Ovary (tissue), 10 donors: ENCODE measurements at regions of chr5 and their contacts with region 1.

Region 1: GRCh38 chr5:79020861-79021561 is 35.9 kb upstream of the ARSB start:
- DNase-seq: peak; percentile 37 to 58 (median 50)
- H3K4me3 ChIP-seq: no peak overlapping the region
- H3K27ac ChIP-seq: no peak overlapping the region
- H3K4me1 ChIP-seq: no peaks in the 10 kb centered on the region
- H3K27me3 ChIP-seq: no peaks in the 10 kb centered on the region
- CTCF ChIP-seq: peak; percentile 37 to 55 (median 50)
- EP300 ChIP-seq: no peak
- POLR2A ChIP-seq: no peak

Region 2: DNA sequence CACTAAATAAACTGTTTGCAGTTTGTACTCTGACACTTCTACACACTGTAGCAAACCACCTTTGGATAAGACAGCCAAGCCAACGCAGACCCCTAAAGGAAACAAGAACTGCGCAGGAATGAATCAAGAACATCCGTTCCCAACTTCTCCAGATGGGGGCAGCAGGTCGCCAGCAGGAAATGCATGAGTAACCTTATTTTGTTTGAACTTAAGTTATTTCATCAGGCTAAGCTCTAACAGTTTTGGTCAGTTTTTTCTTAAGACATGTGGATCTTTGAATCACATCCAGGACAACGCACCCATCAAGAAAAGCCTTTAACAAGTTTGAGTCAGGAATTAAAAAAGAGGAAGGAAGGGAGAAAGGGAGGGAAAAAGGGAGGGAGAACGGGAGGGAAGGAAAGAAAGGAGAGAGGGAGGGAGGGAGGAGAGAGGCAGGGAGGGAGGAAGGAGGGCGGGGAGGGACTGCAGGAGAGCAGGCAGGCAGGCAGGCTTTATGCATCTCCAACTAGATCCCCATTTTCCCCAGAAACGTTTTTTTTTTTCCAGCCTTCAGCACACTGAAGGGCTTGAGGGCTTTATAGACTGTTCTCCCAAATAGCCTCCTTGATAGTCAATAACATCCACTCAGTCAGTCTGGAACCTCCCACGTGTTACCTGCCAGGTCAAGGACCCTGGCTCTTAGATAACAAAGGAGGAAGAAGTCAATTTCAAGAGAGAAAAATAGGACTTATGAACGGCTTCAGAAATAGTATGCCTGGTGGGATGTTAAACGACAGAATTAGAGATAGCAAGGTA is 112.8 kb after region 1 on chr5:
- intact Hi-C with region 1: loop called (anchors 5 kb)
- DNase-seq: peak; percentile 62 to 80 (median 74)
- H3K4me3 ChIP-seq: peak overlapping the region; percentile 22
- H3K27ac ChIP-seq: peak overlapping the region in 1 of 2 donors; percentile 56
- H3K4me1 ChIP-seq: no peaks in the 10 kb centered on the region
- H3K27me3 ChIP-seq: no peaks in the 10 kb centered on the region
- CTCF ChIP-seq: peak; percentile 43 to 73 (median 70)
- EP300 ChIP-seq: no peak
- POLR2A ChIP-seq: no peak

Region 3: GRCh38 chr5:79464695-79465332 is 443.8 kb after region 1 on chr5:
- intact Hi-C with region 1: loop called in 2 of 4 experiments (anchors 5 to 10 kb)
- DNase-seq: no peak
- H3K4me3 ChIP-seq: no peak overlapping the region
- H3K27ac ChIP-seq: no peak overlapping the region
- H3K4me1 ChIP-seq: no peaks in the 10 kb centered on the region
- H3K27me3 ChIP-seq: no peaks in the 10 kb centered on the region
- CTCF ChIP-seq: peak in 2 of 3 donors; percentile 35 to 42
- EP300 ChIP-seq: no peak
- POLR2A ChIP-seq: no peak

Region 4: GRCh38 chr5:79857714-79858409 is 836.9 kb after region 1 on chr5:
- intact Hi-C with region 1: loop called in 1 of 4 experiments (anchors 10 kb)
- DNase-seq: peak; percentile 67 to 87 (median 85)
- H3K4me3 ChIP-seq: no peak overlapping the region
- H3K27ac ChIP-seq: no peak overlapping the region
- H3K4me1 ChIP-seq: no peaks in the 10 kb centered on the region
- H3K27me3 ChIP-seq: no peaks in the 10 kb centered on the region
- CTCF ChIP-seq: peak; percentile 80 to 87 (median 86)
- EP300 ChIP-seq: no peak
- POLR2A ChIP-seq: no peak